Gastrocnemius medialis (tissue), 4 donors: ENCODE measurements at regions of chr14 and their contacts with region 1.

Region 1: DNA sequence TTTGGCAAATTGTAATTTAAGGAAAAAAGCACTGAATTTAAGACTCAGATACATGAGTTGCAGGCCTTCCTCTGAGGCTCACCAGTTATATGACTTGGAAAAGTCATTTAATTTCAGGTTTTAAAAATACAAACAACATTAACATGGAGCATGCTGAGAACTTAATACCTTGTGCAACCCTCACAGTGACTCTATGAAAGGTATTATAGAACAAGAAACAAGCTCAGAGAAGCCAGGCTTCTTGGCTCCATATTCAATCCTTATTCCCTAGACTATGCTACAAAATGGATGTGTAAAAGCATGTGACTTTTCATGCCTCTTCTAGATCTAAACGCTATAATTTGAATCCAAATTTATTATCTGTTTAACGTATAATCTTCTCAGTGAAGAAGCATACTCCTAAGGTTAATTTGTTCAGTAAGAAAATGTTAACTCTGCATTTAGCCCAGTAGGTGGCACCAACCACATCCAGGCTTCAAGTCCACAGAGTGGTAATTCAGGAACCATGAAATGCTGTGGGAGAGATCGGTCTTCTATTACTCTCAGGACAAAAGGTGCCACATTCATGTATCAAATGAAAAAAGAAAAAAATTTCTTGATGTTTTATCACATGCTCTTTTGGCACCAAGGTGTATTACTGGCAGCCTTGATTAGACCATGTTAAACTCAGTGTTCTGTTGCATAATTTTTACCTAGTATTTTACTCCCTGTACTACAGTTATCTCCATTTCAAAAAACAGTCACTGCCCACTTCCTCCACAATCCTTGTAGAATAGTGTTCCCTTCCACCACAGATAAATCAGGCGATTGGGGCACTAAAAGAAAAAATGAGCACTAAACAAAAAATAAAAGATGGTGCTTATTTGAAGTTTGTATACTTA is 9.3 kb downstream of the CCDC196 start:
- DNase-seq: peak; percentile 29 to 31
- ATAC-seq: peak; percentile 88 to 97
- H3K4me3 ChIP-seq: peak overlapping the region in 2 of 4 donors; percentile 12 to 19
- H3K27ac ChIP-seq: no peak overlapping the region
- H3K4me1 ChIP-seq: peaks cover 0 to 5% of the 10 kb centered on the region in 2 donors
- H3K27me3 ChIP-seq: no peaks in the 10 kb centered on the region
- CTCF ChIP-seq: peak; percentile 43 to 85 (median 68)
- POLR2A ChIP-seq: no peak

Region 2: DNA sequence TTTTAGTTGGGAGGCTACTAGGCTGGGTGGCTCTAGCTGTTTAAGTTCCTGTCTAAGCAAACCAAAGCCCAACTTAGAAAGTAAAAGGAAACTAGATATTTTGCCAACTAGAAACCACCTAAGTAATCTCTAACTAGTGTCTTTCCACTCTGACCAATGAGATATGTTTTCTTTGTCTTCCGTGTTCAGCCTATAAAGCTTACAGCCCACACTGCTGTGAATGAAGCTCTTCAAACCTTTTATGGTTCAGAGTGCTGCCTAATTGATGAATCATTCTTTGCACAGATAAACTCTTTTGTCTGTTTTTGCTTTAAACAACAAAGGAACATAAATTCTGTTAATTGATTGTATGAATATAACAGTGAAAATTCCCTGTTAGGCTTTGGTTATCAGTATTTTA is 1016.9 kb before region 1 on chr14:
- in situ Hi-C with region 1: no loop called
- intact Hi-C with region 1: no loop called
- DNase-seq: no peak
- ATAC-seq: no peak
- H3K4me3 ChIP-seq: no peak overlapping the region
- H3K27ac ChIP-seq: no peak overlapping the region
- H3K4me1 ChIP-seq: peaks cover 6 to 9% of the 10 kb centered on the region in 2 donors
- H3K27me3 ChIP-seq: no peaks in the 10 kb centered on the region
- CTCF ChIP-seq: no peak
- POLR2A ChIP-seq: no peak

Region 3: DNA sequence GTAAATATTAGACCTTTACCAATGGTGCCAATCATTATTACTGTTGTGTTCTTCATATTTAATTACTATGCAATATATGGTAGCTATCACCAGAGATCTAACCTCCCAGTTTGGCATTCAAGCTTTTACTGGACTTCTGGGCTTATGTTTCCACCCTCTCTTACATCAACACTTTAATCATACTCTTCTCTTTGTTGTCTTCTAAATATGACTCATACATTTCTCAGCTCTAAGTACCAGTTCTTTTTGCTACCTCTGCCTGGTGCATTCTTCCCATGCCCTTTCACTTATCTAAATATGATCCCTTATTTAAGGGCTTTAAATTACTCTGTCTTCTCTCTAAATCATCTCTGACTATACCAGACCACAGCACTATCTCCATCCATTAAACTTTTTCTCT is 255.4 kb before region 1 on chr14:
- in situ Hi-C with region 1: no loop called
- intact Hi-C with region 1: no loop called
- DNase-seq: no peak
- ATAC-seq: no peak
- H3K4me3 ChIP-seq: no peak overlapping the region
- H3K27ac ChIP-seq: no peak overlapping the region
- H3K4me1 ChIP-seq: no peaks in the 10 kb centered on the region
- H3K27me3 ChIP-seq: no peaks in the 10 kb centered on the region
- CTCF ChIP-seq: no peak
- POLR2A ChIP-seq: no peak

Region 4: DNA sequence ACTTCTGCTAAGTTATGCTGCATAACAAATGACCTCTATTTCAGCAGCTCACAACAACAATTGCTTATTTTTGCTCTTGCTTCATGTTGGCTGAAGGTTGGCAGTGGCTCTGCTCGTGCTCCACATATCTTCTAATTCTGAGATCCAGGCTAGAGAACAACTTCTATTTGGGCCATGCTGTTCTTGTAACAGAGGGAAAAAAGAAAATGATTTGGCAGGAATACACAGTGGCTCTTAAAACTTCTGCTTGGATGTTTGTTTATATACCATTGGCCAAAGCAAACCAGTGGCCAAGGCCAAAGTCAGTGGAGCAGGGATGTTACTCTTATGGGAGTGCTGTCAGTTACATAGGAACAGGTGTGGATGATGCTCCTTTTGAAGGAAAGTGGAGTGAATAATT is 44.6 kb after region 1 on chr14:
- in situ Hi-C with region 1: no loop called
- intact Hi-C with region 1: loop called (anchors 5 kb)
- DNase-seq: no peak
- ATAC-seq: no peak
- H3K4me3 ChIP-seq: no peak overlapping the region
- H3K27ac ChIP-seq: no peak overlapping the region
- H3K4me1 ChIP-seq: peaks cover 22 to 24% of the 10 kb centered on the region in 2 donors
- H3K27me3 ChIP-seq: no peaks in the 10 kb centered on the region
- CTCF ChIP-seq: no peak
- POLR2A ChIP-seq: no peak

Region 5: DNA sequence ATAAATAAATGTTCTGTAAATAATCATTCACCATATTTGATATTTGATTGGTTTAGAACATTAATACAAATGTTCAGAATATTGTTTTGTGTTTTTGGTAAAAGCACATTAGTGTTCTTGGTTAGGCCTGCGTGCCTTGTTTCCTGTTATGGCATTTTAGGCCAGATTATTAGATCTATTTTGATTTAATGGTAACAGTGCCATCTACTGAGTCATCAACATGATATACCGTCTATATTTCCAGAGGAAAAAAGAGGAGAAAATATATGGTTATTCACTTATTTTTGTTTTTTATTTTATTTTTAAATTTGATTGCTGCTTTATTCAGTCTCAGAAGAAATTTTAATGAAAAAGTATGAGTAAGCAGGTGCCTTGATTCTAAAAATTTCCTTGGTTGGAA is 72.8 kb after region 1 on chr14:
- in situ Hi-C with region 1: no loop called
- intact Hi-C with region 1: loop called (anchors 5 kb)
- DNase-seq: no peak
- ATAC-seq: no peak
- H3K4me3 ChIP-seq: no peak overlapping the region
- H3K27ac ChIP-seq: no peak overlapping the region
- H3K4me1 ChIP-seq: peaks cover 0 to 12% of the 10 kb centered on the region in 2 donors
- H3K27me3 ChIP-seq: no peaks in the 10 kb centered on the region
- CTCF ChIP-seq: no peak
- POLR2A ChIP-seq: no peak